Activated T-helper 1 cell treated with anti-CD3 and anti-CD28 coated beads, Interleukin-12 subunit alpha, Interleukin-12 subunit beta, Interleukin-2, Interleukin-4 antibody, amounts not matched to agents 30 ng/mL and 10 ng/mL and 1 ng/mL, durations not matched to agents 14 hours and 24 hours and 36 hours (primary cell): ENCODE measurements at regions of chr2 and their contacts with region 1.

Region 1: DNA sequence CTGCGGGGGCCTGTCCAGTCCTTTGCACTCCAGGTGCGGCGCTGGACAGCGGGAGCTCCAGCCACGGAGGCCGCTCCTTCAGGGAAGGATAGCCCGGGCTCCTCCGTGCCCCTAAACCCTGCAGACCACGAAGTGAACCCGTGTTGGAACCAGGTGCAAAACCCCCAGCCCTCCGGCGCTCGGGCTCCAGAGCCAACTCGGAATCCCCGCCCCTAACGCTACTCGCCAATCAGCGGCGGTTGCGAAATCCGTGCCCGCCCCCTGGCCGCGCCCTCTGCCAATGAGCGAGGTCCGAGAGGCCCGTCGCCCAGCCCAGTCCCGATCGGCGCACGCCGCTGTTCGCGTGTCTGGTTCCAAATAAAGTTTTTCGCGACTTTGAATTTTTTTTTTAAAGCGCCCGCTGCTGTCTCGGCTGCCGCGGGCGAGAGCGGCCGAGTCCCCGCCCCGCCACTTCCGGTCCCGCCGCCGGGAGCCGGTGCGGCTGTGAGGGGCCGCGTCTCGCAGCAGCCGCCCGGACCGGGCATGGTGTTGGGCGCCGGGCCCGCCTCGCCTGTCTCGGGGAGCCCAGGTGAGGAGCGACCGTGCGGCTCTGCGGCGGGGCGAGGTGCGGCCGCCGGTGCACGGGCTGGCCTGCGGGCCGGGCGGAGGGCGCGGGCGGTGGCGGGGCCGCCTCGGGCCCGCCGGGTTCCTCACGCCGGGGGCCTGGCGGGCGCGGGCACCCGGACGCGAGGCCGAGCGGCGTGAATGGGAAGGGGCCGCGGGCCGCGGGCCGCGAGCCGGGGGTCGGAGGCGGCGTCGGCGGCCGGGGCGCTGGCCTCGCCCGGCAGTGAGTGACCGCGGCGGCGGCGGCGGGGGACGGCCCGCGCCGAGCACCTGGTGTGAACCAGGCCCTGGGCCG is at the start of gene UBE2F:
- DNase-seq: peak; percentile 98
- H3K4me3 Mint-ChIP-seq: peak within 1 kb of the TSS; percentile 90
- H3K27ac Mint-ChIP-seq: peak within 1 kb of the TSS; percentile 85
- H3K4me1 Mint-ChIP-seq: peaks cover 45% of the 10 kb centered on the region
- H3K27me3 Mint-ChIP-seq: no peaks in the 10 kb centered on the region
- total RNA-seq, gene UBE2F: 121 TPM in 2 replicates

Region 2: DNA sequence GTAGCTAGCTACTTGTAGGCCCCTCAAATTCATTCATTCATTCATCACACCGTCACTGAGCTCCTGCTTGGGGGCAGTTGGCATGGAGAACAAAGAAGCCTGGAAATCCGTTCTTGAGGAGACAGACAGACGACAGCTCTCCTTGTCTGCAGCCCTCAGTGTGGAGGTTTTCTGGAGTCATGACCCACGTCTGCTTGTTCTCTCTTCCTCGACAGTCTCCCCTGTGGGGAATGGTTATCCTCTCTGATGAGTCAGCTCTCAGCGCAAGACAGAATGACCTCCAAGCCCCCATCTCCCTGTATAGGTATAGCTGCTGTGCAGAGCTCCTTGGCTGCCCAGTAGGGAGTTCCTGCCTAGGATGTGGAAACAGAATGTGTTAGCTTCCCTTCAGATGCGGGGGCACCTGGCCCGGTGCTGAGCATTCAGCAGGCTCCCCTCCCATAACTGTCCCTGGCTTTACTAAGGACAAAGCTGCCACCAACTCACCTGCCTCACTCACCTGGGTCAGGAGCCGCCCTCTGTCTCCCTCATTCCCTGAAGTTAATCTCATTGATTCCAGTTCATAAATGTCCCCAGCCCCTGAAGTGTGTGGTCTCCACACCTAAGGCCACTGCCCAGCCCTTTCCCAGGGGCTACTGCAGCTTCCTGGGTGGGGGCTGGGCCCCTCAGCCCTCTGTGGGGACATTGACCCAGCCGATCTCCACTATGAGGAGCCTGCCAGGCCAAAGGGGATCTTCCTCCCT is 1272.5 kb before region 1 on chr2:
- intact Hi-C with region 1: no loop called
- DNase-seq: no peak
- H3K4me3 Mint-ChIP-seq: no peak overlapping the region
- H3K27ac Mint-ChIP-seq: no peak overlapping the region
- H3K4me1 Mint-ChIP-seq: no peaks in the 10 kb centered on the region
- H3K27me3 Mint-ChIP-seq: peaks cover 13% of the 10 kb centered on the region

Region 3: GRCh38 chr2:237904801-237905599 is 61.8 kb before region 1 on chr2:
- intact Hi-C with region 1: loop called (anchors 2 kb)
- DNase-seq: no peak
- H3K4me3 Mint-ChIP-seq: peak overlapping the region; percentile 63
- H3K27ac Mint-ChIP-seq: peak overlapping the region; percentile 93
- H3K4me1 Mint-ChIP-seq: peaks cover 61% of the 10 kb centered on the region
- H3K27me3 Mint-ChIP-seq: no peaks in the 10 kb centered on the region

Region 4: GRCh38 chr2:237998530-237998929 is 31.7 kb after region 1 on chr2:
- intact Hi-C with region 1: loop called (anchors 1 kb)
- DNase-seq: peak; percentile 33
- H3K4me3 Mint-ChIP-seq: peak overlapping the region; percentile 68
- H3K27ac Mint-ChIP-seq: peak overlapping the region; percentile 97
- H3K4me1 Mint-ChIP-seq: peaks cover 54% of the 10 kb centered on the region
- H3K27me3 Mint-ChIP-seq: no peaks in the 10 kb centered on the region

Region 5: GRCh38 chr2:238139196-238140039 is 172.6 kb after region 1 on chr2:
- intact Hi-C with region 1: loop called (anchors 1 kb)
- DNase-seq: no peak
- H3K4me3 Mint-ChIP-seq: no peak overlapping the region
- H3K27ac Mint-ChIP-seq: no peak overlapping the region
- H3K4me1 Mint-ChIP-seq: peaks cover 6% of the 10 kb centered on the region
- H3K27me3 Mint-ChIP-seq: peaks cover 2% of the 10 kb centered on the region

Region 6: GRCh38 chr2:238263204-238264071 is 296.6 kb after region 1 on chr2:
- intact Hi-C with region 1: loop called (anchors 1 kb)
- DNase-seq: peak; percentile 67
- H3K4me3 Mint-ChIP-seq: no peak overlapping the region
- H3K27ac Mint-ChIP-seq: peak overlapping the region; percentile 43
- H3K4me1 Mint-ChIP-seq: peaks cover 7% of the 10 kb centered on the region
- H3K27me3 Mint-ChIP-seq: no peaks in the 10 kb centered on the region